ENCODE measurements at regions of chr14 and their contacts with region 1.

Region 1: DNA sequence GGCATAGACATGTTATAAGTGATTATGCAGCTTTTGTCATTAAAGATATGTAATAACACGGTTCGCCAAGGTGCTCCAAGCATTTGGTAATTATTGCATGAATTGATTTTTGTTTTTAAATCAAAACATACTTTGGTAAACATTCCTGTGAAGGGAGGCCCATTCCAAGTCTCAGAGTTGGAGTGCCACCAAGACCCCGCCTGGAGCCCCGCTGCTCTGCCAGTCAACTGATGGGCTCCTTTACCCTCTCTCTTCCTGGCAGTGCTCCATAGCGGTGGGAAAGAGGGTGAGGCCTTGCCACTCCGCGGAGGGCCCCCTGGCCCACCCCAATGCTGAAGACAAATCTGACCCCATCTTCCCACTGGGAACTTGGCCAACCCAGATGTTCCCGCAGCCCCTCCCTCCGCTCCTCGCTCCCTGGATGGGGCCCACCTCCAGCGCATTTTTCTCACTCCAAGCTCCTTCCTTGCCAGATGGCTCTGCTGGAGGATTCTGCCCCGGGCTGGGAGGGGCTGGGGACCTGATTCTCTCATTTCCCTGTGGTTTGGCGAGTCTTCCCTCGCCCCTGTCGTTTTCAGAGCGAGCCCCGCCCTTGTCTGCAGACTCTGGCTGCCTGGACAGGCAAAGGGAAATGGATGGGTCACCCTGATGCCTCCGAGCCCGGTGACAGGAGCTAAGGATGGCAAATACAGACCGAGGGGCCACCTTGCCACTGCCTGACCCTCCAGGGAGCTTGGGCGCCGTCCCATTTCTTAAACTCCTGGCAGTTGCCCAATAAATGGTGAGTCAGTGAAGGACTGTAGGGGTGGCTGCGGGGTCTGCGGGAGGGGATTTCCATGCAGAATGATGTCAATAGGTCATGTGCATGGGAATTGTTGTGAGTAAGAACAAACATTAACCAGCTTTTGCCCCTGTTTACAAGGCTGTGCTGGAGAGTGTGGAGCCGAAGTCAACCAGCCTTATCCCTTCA is 9.2 kb upstream of the PAPLN start:
- DNase-seq: peak in 1 of 2 donors; percentile 43
- H3K4me3 ChIP-seq: peak overlapping the region in 2 of 3 donors; percentile 13 to 46
- H3K27ac ChIP-seq: peak overlapping the region; percentile 43 to 45
- H3K4me1 ChIP-seq: peaks cover 11 to 12% of the 10 kb centered on the region in 2 donors
- H3K27me3 ChIP-seq: no peaks in the 10 kb centered on the region
- CTCF ChIP-seq: no peak
- POLR2A ChIP-seq: no peak

Region 2: GRCh38 chr14:71319666-71320065 is 1908.4 kb before region 1 on chr14:
- intact Hi-C with region 1: loop called (anchors 10 kb)
- DNase-seq: peak in 1 of 2 donors; percentile 28
- H3K4me3 ChIP-seq: peak overlapping the region; percentile 71 to 96 (median 78)
- H3K27ac ChIP-seq: peak overlapping the region; percentile 98 to 99
- H3K4me1 ChIP-seq: peaks cover 0 to 5% of the 10 kb centered on the region in 2 donors
- H3K27me3 ChIP-seq: no peaks in the 10 kb centered on the region
- CTCF ChIP-seq: no peak
- POLR2A ChIP-seq: no peak

Region 3: DNA sequence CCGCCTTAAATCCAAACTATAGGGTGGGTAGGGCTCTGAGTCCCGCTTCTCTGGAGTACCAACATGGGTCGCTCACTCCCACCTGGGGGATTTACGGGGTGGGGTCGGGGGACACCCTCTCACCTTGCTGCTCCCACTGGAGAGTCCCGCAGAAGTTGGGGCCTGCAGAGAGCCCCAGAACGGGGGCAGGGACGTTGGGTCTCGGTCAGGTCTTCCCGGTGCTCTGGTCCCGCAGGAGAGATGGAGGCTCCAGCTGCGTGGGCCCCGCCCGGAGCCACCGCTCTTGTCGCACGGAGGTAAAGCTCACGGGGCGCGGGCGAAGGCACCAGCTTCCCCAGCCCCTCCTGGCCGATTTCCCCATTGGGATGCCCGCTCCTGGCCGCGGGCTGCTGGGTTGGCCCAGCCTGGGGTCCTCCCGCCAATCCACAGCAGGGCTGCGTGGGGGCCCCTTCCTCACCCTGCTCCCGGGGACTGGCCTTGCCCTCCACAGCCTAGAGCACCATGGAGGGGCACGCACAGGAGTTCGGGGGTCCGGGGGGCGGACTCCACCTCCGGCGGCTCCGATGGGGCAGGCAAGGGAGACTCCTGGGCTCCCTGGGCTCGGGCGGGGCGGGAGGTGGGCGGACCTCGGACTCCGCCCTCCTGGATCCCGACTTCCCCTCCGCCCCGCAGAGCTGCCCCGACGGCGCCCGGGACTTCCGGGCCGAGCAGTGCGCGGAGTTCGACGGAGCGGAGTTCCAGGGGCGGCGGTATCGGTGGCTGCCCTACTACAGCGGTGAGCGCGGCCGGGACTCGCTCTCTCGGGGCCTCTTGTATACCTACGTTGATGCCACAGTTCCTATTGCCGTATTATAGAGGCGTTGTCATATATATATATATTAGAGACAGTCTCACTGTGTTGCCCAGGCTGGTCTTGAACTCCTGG is 17.6 kb after region 1 on chr14:
- intact Hi-C with region 1: no loop called
- DNase-seq: no peak
- H3K4me3 ChIP-seq: peak overlapping the region; percentile 44 to 81 (median 70)
- H3K27ac ChIP-seq: peak overlapping the region; percentile 7 to 29
- H3K4me1 ChIP-seq: no peaks in the 10 kb centered on the region
- H3K27me3 ChIP-seq: no peaks in the 10 kb centered on the region
- CTCF ChIP-seq: no peak
- POLR2A ChIP-seq: no peak

Region 4: GRCh38 chr14:73283608-73284379 is 55.7 kb after region 1 on chr14:
- intact Hi-C with region 1: loop called (anchors 10 kb)
- DNase-seq: no peak
- H3K4me3 ChIP-seq: no peak overlapping the region
- H3K27ac ChIP-seq: no peak overlapping the region
- H3K4me1 ChIP-seq: no peaks in the 10 kb centered on the region
- H3K27me3 ChIP-seq: no peaks in the 10 kb centered on the region
- CTCF ChIP-seq: no peak
- POLR2A ChIP-seq: no peak

Measured in breast epithelium (tissue), 4 donors.